HCT116 (cell line): ENCODE measurements at regions of chr10 and their contacts with region 1.

Region 1: DNA sequence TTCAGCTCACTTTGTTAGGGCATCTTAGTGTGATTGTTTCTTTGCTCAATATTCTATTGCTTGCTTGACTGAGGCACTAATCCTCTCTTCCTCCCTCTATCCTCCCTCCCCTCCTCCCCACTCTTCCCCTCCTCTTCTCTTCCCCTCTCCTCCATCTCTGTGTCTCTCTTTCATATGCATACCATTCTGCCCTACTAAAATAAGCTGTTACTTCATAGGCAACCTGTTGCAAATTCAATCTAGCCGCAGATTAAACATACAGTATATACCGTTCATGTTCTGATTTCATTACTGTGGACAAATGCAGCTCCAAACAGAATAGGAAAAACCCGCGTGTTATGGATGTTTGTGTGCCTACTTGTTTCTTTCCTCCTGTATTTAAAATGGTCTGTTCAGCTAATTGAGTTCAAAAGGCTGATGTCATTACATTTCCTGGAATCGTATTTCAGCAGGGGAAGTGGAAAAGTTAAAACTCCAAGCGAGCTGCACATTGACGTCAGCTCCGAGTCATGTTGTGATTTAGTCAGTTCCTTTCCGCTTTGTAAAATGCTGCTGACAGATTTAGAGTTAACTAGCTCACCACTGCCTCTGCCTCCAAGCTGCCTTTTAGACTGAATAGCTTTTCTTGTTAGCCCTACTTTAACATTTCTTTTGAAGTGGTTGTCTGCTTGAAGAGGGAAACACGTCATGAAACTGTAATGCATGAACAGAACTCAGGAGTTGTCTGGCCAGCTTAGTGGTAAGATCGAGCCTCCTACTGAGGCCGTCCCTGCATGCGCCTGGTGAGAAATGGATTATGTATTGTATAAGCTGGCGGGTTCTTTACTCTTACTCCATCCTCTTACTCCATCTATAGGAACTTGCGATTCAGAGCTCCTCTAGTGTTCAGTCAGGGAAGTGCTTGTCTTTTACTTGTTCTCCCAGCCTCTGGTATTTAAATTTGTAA is 69.0 kb downstream of the CREM start:
- DNase-seq: peak; percentile 82
- ATAC-seq: peak; percentile 96
- H3K4me3 ChIP-seq: peak overlapping the region; percentile 27 to 58
- H3K27ac ChIP-seq: peak overlapping the region; percentile 57
- H3K4me1 ChIP-seq: peaks cover 5 to 18% of the 10 kb centered on the region in 2 experiments; a peak in 3 of 4 replicates
- H3K27me3 ChIP-seq: no peaks in the 10 kb centered on the region
- CTCF ChIP-seq: peak; percentile 68 to 88 (median 80)
- POLR2A ChIP-seq: no peak
- RAD21 ChIP-seq: peak; percentile 57

Region 2: GRCh38 chr10:34994565-34995142 is 201.0 kb before region 1 on chr10:
- CTCF ChIA-PET with region 1: interaction called, 11 read pairs
- POLR2A ChIA-PET with region 1: no interaction called
- RAD21 ChIA-PET with region 1: no interaction called
- intact Hi-C with region 1: no loop called
- DNase-seq: peak; percentile 76
- ATAC-seq: peak; percentile 92
- H3K4me3 ChIP-seq: no peak overlapping the region
- H3K27ac ChIP-seq: no peak overlapping the region
- H3K4me1 ChIP-seq: peaks cover 8 to 16% of the 10 kb centered on the region in 2 experiments; a peak in 3 of 4 replicates
- H3K27me3 ChIP-seq: no peaks in the 10 kb centered on the region
- CTCF ChIP-seq: peak; percentile 75 to 84 (median 83)
- POLR2A ChIP-seq: no peak
- RAD21 ChIP-seq: peak; percentile 95

Region 3: GRCh38 chr10:35119378-35119777 is 76.3 kb before region 1 on chr10:
- CTCF ChIA-PET with region 1: interaction called, 18 read pairs
- POLR2A ChIA-PET with region 1: no interaction called
- RAD21 ChIA-PET with region 1: no interaction called
- intact Hi-C with region 1: no loop called
- DNase-seq: no peak
- ATAC-seq: no peak
- H3K4me3 ChIP-seq: no peak overlapping the region
- H3K27ac ChIP-seq: no peak overlapping the region
- H3K4me1 ChIP-seq: no peaks in the 10 kb centered on the region
- H3K27me3 ChIP-seq: no peaks in the 10 kb centered on the region
- CTCF ChIP-seq: no peak
- POLR2A ChIP-seq: no peak
- RAD21 ChIP-seq: no peak

Region 4: GRCh38 chr10:35126530-35127296 is 68.9 kb before region 1 on chr10 and contains the start of gene CREM:
- CTCF ChIA-PET with region 1: interaction called, 23 read pairs
- POLR2A ChIA-PET with region 1: interaction called, 6 read pairs
- RAD21 ChIA-PET with region 1: interaction called, 5 to 9 read pairs
- intact Hi-C with region 1: loop called (anchors 1 kb)
- DNase-seq: peak; percentile 90
- ATAC-seq: peak; percentile 87
- H3K4me3 ChIP-seq: peak within 1 kb of the TSS; percentile 92 to 97
- H3K27ac ChIP-seq: peak within 1 kb of the TSS; percentile 99
- H3K4me1 ChIP-seq: peaks cover 3 to 21% of the 10 kb centered on the region in 2 experiments; a peak in 3 of 4 replicates
- H3K27me3 ChIP-seq: no peaks in the 10 kb centered on the region
- CTCF ChIP-seq: peak; percentile 72 to 82 (median 75)
- POLR2A ChIP-seq: peak; percentile 84
- RAD21 ChIP-seq: peak; percentile 69
- total RNA-seq, gene CREM: 21.4 TPM

Region 5: GRCh38 chr10:35184527-35185171 is 11.0 kb before region 1 on chr10:
- CTCF ChIA-PET with region 1: interaction called, 34 read pairs
- POLR2A ChIA-PET with region 1: interaction called, 4 read pairs
- RAD21 ChIA-PET with region 1: interaction called in 1 of 2 experiments, 3 read pairs
- intact Hi-C with region 1: no loop called
- DNase-seq: no peak
- ATAC-seq: no peak
- H3K4me3 ChIP-seq: no peak overlapping the region
- H3K27ac ChIP-seq: no peak overlapping the region
- H3K4me1 ChIP-seq: no peaks in the 10 kb centered on the region
- H3K27me3 ChIP-seq: no peaks in the 10 kb centered on the region
- CTCF ChIP-seq: no peak
- POLR2A ChIP-seq: no peak
- RAD21 ChIP-seq: no peak

Region 6: GRCh38 chr10:35218339-35218955 is 22.8 kb after region 1 on chr10:
- CTCF ChIA-PET with region 1: interaction called, 11 read pairs
- POLR2A ChIA-PET with region 1: no interaction called
- RAD21 ChIA-PET with region 1: no interaction called
- intact Hi-C with region 1: no loop called
- DNase-seq: peak; percentile 86
- ATAC-seq: peak; percentile 86
- H3K4me3 ChIP-seq: no peak overlapping the region
- H3K27ac ChIP-seq: no peak overlapping the region
- H3K4me1 ChIP-seq: peaks cover 0 to 13% of the 10 kb centered on the region in 2 experiments; a peak in 3 of 4 replicates
- H3K27me3 ChIP-seq: no peaks in the 10 kb centered on the region
- CTCF ChIP-seq: peak; percentile 68 to 93 (median 92)
- POLR2A ChIP-seq: no peak
- RAD21 ChIP-seq: peak; percentile 85